ENCODE measurements at regions of chr22 and their contacts with region 1.

Region 1: GRCh38 chr22:35627264-35628041 is 10.3 kb upstream of the MB start:
- DNase-seq: peak; percentile 80
- H3K4me3 Mint-ChIP-seq: peak overlapping the region; percentile 84
- H3K27ac Mint-ChIP-seq: peak overlapping the region; percentile 84
- H3K4me1 Mint-ChIP-seq: peaks cover 28% of the 10 kb centered on the region
- H3K27me3 Mint-ChIP-seq: peaks cover 4% of the 10 kb centered on the region

Region 2: GRCh38 chr22:35399678-35400334 is 227.6 kb before region 1 on chr22 and contains the start of gene MCM5:
- intact Hi-C with region 1: no loop called
- DNase-seq: peak; percentile 99
- H3K4me3 Mint-ChIP-seq: peak within 1 kb of the TSS; percentile 100
- H3K27ac Mint-ChIP-seq: peak within 1 kb of the TSS; percentile 99
- H3K4me1 Mint-ChIP-seq: peaks cover 26% of the 10 kb centered on the region
- H3K27me3 Mint-ChIP-seq: no peaks in the 10 kb centered on the region
- total RNA-seq, gene MCM5: 334 and 343 TPM in 2 replicates

Region 3: GRCh38 chr22:35684270-35684700 is 56.8 kb after region 1 on chr22:
- intact Hi-C with region 1: loop called (anchors 5 kb)
- DNase-seq: no peak
- H3K4me3 Mint-ChIP-seq: no peak overlapping the region
- H3K27ac Mint-ChIP-seq: no peak overlapping the region
- H3K4me1 Mint-ChIP-seq: peaks cover 8% of the 10 kb centered on the region
- H3K27me3 Mint-ChIP-seq: peaks cover 4% of the 10 kb centered on the region

Region 4: GRCh38 chr22:35840302-35840739 is 212.9 kb after region 1 on chr22:
- intact Hi-C with region 1: loop called (anchors 10 kb)
- DNase-seq: no peak
- H3K4me3 Mint-ChIP-seq: no peak overlapping the region
- H3K27ac Mint-ChIP-seq: no peak overlapping the region
- H3K4me1 Mint-ChIP-seq: peaks cover 12% of the 10 kb centered on the region
- H3K27me3 Mint-ChIP-seq: peaks cover 30% of the 10 kb centered on the region

Region 5: DNA sequence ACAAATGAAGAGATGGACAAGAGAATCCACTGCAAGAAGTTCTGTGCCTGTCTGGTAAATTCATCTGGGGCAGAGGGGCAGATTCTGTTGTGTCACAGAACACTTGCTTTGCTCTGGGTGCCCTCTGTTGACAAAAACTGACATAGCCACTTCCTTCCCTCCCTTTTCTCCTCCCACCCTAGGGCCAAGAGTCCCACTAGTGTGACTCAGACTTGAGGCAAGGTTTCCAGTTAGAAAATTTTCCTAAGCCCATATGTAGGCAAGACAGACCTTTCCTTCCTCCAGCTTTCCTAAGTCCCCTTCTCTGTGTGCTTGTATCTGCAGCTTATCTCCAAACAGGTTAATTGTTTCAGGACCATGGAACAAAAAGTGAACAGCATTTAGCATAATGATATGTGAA is 294.3 kb after region 1 on chr22:
- intact Hi-C with region 1: loop called (anchors 1 kb)
- DNase-seq: peak; percentile 81
- H3K4me3 Mint-ChIP-seq: no peak overlapping the region
- H3K27ac Mint-ChIP-seq: no peak overlapping the region
- H3K4me1 Mint-ChIP-seq: peaks cover 5% of the 10 kb centered on the region
- H3K27me3 Mint-ChIP-seq: no peaks in the 10 kb centered on the region

Region 6: DNA sequence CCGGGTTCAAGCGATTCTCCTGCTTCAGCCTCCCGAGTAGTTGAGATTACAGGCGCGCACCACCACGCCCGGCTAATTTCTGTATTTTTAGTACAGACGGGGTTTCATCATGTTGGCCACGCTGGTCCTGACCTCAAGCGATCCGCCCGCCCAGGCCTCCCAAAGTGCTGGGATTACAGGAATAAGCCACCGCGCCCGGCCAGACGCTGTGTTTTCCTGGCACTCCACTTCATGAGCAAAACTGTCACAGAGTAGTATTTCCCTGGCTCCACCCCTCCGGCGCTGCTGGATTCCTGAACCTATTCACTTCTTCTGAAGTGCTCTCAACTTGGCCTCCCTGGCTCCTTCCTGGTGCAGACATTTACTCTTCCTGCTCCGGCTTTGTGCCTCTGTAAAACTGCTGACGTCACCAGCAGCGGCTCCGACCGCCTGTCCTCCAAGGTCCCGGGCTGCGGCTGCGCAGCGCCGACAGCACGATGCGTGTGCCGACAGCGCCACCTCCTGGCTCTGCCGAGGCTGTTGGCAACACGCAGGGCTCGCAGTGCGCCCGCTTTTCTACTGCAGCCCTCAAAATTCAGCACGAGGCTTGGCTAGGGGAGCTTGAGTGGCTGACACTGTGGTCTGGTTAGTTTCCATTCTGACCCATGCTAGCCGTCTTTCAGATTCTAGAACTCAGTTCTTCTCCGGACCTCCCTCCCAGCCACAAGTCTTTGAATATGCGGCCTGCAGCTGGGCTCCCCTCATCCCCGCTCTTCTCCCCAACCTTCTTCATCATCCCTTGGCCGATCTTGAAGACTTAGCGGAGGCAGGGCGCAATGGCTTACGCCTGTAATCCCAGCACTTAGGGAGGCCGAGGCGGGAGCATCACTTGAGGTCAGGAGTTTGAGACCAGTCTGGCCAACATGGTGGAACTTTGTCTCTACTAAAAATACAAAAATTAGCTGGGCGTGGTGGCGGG is 496.5 kb after region 1 on chr22:
- intact Hi-C with region 1: loop called (anchors 2 kb)
- DNase-seq: peak; percentile 98
- H3K4me3 Mint-ChIP-seq: peak overlapping the region; percentile 71
- H3K27ac Mint-ChIP-seq: peak overlapping the region; percentile 82
- H3K4me1 Mint-ChIP-seq: peaks cover 8% of the 10 kb centered on the region
- H3K27me3 Mint-ChIP-seq: peaks cover 8% of the 10 kb centered on the region